Activated CD4-positive, alpha-beta T cell treated with anti-CD3 and anti-CD28 coated beads for 36 hours (primary cell): ENCODE measurements at regions of chr1 and their contacts with region 1.

Region 1: DNA sequence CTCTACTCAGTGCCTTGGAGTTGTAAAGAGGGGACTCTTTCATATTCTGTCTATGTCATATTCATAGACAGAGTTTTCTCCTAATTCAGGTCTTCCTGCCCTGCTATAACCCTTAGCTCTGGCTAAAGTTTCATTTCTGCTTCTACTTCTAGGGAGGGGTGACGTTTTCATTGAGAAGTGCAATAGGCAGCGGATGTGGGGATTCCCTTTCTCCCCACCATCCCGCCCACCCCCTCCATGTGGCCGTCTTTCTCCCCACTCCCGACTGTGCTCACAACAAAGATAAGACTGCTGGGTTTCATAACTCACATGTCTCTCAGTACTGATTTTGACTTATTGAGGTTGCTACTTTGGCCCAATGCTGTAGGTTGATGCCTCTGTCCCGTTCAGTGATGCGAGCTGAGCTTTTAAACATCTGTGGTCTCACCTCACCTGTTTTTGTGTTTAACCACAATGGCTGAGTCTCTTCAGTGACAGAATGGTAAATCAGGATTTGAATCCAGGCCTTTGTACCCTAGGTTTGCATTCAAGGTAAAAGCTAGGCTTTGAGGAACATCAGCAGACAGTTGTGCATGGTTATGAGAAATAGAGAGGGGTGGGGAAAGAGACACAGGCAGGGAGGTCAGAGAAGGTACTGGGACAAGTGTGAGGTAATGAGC is 7.8 kb upstream of the KIF14 start:
- DNase-seq: peak; percentile 74
- ATAC-seq: peak; percentile 66
- H3K4me3 Mint-ChIP-seq: no peak overlapping the region
- H3K27ac Mint-ChIP-seq: peak overlapping the region; percentile 45
- H3K4me1 Mint-ChIP-seq: peaks cover 37% of the 10 kb centered on the region
- H3K27me3 Mint-ChIP-seq: no peaks in the 10 kb centered on the region

Region 2: GRCh38 chr1:200150720-200151119 is 477.6 kb before region 1 on chr1:
- CTCF ChIA-PET with region 1: no interaction called
- POLR2A ChIA-PET with region 1: no interaction called
- intact Hi-C with region 1: no loop called
- DNase-seq: peak; percentile 25
- ATAC-seq: no peak
- H3K4me3 Mint-ChIP-seq: no peak overlapping the region
- H3K27ac Mint-ChIP-seq: peak overlapping the region; percentile 5
- H3K4me1 Mint-ChIP-seq: peaks cover 42% of the 10 kb centered on the region
- H3K27me3 Mint-ChIP-seq: no peaks in the 10 kb centered on the region

Region 3: DNA sequence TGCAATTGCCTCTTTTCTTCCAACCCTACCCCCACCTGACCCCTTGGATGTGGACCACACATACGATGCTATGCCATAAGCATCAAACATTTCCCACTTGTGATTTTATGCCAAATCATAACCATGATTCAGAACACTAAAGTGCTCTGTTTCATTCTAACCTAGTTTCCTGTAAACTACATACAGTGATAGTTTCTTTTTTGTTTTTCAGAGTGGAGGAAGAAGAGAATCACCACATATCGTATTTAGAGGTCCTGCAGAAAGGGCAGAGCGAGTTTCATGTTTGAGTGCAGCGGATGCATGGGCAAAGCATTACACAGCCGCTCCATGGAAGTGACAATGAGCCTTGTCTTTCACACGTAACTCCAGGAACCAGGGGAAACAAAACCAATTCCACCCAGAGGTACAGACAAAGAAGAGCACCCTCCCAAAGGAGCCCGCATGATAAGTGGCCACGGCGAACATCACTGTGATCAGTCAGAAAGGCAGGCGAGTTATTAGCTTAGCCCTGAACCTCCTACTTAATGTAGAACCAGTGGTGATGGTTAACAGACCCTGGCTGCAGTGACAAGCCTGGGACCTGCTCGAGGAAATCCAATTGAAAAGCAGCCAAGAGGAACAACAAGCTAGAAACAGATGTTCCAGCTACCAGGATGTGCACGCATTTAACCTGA is 154.5 kb before region 1 on chr1:
- CTCF ChIA-PET with region 1: no interaction called
- POLR2A ChIA-PET with region 1: no interaction called
- intact Hi-C with region 1: loop called in 1 of 2 experiments (anchors 2 kb)
- DNase-seq: peak; percentile 55
- ATAC-seq: peak; percentile 80
- H3K4me3 Mint-ChIP-seq: peak overlapping the region; percentile 32
- H3K27ac Mint-ChIP-seq: peak overlapping the region; percentile 48
- H3K4me1 Mint-ChIP-seq: peaks cover 47% of the 10 kb centered on the region
- H3K27me3 Mint-ChIP-seq: peaks cover 8% of the 10 kb centered on the region

Region 4: GRCh38 chr1:200558866-200559459 is 69.4 kb before region 1 on chr1:
- CTCF ChIA-PET with region 1: no interaction called
- POLR2A ChIA-PET with region 1: no interaction called
- intact Hi-C with region 1: loop called (anchors 2 to 5 kb)
- DNase-seq: peak; percentile 24
- ATAC-seq: peak; percentile 60
- H3K4me3 Mint-ChIP-seq: no peak overlapping the region
- H3K27ac Mint-ChIP-seq: no peak overlapping the region
- H3K4me1 Mint-ChIP-seq: peaks cover 10% of the 10 kb centered on the region
- H3K27me3 Mint-ChIP-seq: no peaks in the 10 kb centered on the region

Region 5: GRCh38 chr1:200669314-200670241 is 41.2 kb after region 1 on chr1 and contains the start of gene DDX59:
- CTCF ChIA-PET with region 1: interaction called, 32 read pairs
- POLR2A ChIA-PET with region 1: no interaction called
- intact Hi-C with region 1: loop called in 1 of 2 experiments (anchors 1 kb)
- DNase-seq: peak; percentile 96
- ATAC-seq: peak; percentile 87
- H3K4me3 Mint-ChIP-seq: peak within 1 kb of the TSS; percentile 94
- H3K27ac Mint-ChIP-seq: peak within 1 kb of the TSS; percentile 99
- H3K4me1 Mint-ChIP-seq: peaks cover 40% of the 10 kb centered on the region
- H3K27me3 Mint-ChIP-seq: no peaks in the 10 kb centered on the region
- total RNA-seq, gene DDX59: 17.4 to 19.4 TPM

Region 6: GRCh38 chr1:200738740-200739498 is 110.6 kb after region 1 on chr1 and contains the start of gene CAMSAP2:
- CTCF ChIA-PET with region 1: no interaction called
- POLR2A ChIA-PET with region 1: no interaction called
- intact Hi-C with region 1: loop called in 1 of 2 experiments (anchors 2 kb)
- DNase-seq: peak; percentile 74
- ATAC-seq: peak; percentile 51
- H3K4me3 Mint-ChIP-seq: peak within 1 kb of the TSS; percentile 91
- H3K27ac Mint-ChIP-seq: peak within 1 kb of the TSS; percentile 90
- H3K4me1 Mint-ChIP-seq: peaks cover 44% of the 10 kb centered on the region
- H3K27me3 Mint-ChIP-seq: peaks cover 4% of the 10 kb centered on the region
- total RNA-seq, gene CAMSAP2: 2.3 to 3.0 TPM

Region 7: DNA sequence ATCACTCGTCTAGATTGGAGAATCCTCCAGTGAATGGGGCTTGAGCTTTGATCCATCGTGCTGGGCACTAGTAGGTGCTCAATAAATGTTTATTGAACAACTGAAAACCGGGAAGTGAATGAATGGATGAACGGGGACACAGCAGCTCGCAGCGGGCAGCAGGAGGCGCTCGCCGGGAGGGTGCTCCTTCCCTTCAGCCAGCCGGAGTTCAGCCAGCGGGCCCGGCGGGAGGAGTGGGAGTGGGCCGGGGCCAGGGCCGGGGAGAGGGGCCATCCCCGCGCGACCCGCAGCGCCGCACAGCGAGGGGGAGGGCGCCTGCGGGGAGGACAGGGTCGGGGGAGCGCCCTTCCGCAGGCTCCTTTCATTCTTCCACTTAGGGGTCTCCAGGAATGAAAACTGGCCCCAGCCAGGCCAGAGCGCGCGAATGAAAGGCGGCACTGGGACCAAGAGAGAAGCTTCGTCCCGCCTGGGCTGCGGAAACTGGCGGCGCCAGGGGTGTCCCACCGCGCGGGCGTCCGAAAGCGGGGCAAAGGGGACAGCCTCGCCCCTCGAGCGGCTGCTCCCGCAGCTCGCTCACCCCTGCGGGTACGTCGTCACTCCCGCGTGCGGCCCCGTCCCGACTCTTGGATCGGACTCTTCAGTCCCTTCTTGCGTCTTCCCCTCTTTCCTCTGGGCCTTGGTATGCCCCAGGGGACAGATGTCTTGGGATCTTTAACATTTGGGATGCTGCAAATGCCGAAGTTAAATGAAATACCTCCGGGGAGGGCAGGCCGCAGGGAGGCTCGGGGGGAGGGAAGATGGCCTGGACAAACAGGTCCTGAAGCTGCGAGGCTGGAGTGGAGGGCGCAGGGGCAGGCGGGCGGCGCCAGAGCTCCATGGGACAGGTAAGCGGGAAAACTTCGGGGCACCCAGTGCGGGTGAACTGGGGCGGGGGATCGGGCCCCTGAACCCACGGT is 262.7 kb after region 1 on chr1:
- CTCF ChIA-PET with region 1: interaction called, 3 read pairs
- POLR2A ChIA-PET with region 1: no interaction called
- intact Hi-C with region 1: loop called in 1 of 2 experiments (anchors 5 kb)
- DNase-seq: no peak
- ATAC-seq: no peak
- H3K4me3 Mint-ChIP-seq: peak overlapping the region; percentile 12
- H3K27ac Mint-ChIP-seq: no peak overlapping the region
- H3K4me1 Mint-ChIP-seq: peaks cover 46% of the 10 kb centered on the region
- H3K27me3 Mint-ChIP-seq: peaks cover 35% of the 10 kb centered on the region